Activated naive CD8-positive, alpha-beta T cell treated with anti-CD3 and anti-CD28 coated beads, Interleukin-2, amount 10 ng/mL, durations not matched to agents 7 days and 5 days (primary cell): ENCODE measurements at regions of chr11 and their contacts with region 1.

Region 1: DNA sequence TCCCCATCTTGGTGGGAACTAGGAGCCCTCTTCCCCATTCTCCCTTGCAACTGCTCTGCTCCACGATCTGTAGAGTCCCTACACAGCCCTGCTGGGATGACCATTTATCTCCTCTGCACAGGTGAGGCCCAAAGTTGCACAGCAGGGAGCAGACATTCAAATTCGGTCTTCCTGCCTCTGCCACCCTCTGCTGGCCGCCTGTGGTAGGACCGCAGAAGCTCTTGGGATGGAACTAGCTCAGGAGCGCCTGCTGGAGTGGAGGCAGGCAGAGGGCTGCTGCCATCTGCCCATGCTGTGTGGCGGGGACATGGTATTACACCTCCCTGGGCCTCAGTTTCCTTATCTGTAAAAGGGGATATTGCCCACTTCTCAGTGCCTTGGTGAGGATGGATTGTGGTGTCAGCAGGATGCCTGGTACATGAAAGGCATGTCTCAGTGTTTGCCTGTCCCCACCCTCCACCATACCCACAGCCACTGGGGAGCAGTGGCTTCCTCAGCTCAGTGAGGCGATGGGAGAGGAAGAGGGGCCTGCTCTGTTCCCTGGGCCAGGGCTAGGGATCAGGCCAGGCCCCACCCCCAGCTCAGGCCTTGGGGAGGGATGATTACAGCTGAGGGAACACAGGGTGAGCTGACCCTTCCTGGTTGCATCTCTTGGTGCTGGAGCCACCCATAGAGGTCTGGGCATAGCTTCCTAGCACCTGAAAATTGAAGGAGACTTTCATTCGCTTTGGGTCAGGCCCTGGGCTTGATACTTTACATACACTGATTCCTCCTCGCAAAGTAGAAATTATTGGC is 11.3 kb upstream of the OMP start:
- DNase-seq: peak; percentile 86
- ATAC-seq: peak; percentile 92
- H3K4me3 Mint-ChIP-seq: no peak overlapping the region
- H3K27ac Mint-ChIP-seq: no peak overlapping the region
- H3K4me1 Mint-ChIP-seq: peaks cover 3% of the 10 kb centered on the region
- H3K27me3 Mint-ChIP-seq: no peaks in the 10 kb centered on the region

Region 2: DNA sequence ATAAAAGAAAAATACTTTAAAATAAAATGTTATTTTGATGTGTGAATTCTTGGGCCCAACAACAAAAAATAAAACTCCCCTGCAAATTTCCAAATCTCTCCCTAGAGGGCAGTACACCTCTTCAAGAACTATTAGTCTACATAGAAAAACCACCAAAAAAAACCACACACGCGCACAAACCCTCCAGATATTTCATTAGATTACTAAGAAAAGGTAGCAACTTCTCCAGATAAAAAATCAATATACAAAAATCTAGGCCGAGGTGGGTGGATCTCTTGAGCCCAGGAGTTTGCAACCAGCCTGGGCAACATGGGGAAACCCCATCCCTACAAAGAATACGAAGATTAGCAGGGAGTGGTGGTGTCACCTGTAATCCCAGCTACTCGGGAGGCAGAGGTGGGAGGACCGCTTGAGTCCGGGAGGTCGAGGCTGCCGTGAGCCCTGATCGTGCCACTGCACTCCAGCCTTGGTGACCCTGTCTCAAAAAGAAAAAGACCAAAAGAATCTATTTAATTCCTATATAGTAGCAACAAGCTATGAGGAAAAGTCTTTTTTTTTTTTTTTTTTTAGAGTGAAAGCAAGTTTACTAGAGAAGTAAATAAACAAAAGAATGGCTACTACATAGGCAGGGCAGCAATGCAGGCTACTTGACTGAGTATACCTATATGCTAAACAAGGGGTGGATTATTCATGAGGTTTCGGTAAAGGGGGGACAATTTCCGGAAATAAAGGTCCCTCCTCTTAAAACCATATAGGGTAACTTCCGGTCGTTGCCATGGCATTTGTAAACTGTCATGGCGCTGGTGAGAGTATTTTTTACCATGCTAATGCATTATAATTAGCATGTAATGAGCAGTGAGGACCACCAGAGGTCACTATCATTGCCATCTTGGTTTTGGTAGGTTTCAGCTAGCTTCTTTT is 44.1 kb before region 1 on chr11:
- POLR2A ChIA-PET with region 1: interaction called, 15 read pairs
- DNase-seq: peak; percentile 59
- ATAC-seq: peak; percentile 76
- H3K4me3 Mint-ChIP-seq: peak overlapping the region; percentile 63
- H3K27ac Mint-ChIP-seq: peak overlapping the region; percentile 4
- H3K4me1 Mint-ChIP-seq: peaks cover 9% of the 10 kb centered on the region
- H3K27me3 Mint-ChIP-seq: peaks cover 17% of the 10 kb centered on the region

Region 3: DNA sequence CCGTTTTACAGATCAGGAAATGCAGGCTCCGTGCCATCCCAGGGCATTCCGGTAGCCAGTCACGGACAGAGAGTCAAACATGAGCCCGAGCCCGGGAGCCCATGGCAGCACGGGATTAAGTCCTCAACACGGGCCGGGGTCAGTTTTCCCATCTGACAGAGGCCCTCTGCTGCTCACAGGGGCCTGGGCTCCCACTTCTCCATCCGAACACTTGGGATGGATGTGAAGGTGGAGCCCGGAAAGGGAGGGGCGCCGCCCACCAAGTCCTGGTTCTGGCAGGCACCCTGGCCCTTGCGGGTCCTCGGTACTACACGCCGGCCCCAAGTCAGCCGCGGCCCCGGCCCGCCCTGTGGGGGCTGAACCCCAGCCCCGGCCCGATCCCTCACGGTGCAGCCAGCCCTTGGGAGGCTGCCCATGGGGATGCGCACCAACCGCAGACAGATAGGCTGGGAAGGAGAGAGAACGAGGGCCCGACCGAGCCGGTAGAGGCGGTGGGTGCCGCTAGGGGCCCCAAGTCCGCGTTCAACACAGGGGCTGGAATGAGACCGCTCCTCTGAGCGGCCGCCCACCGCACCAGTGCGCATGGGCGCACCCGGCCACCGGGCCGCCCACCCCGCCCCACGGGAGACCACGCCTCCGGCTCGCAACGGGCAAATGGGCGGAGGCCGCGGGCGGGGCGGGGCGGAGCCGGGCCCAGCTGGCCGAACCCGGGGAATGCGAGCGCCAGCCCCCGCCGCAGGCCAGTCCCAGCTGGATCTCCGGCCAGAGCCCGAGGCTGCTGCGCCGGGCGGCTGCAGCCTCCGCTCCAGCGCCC is 24.9 kb before region 1 on chr11 and contains the start of gene CAPN5:
- POLR2A ChIA-PET with region 1: no interaction called
- DNase-seq: peak; percentile 95
- ATAC-seq: peak; percentile 91
- H3K4me3 Mint-ChIP-seq: peak within 1 kb of the TSS; percentile 80
- H3K27ac Mint-ChIP-seq: peak within 1 kb of the TSS; percentile 50
- H3K4me1 Mint-ChIP-seq: peaks cover 6% of the 10 kb centered on the region
- H3K27me3 Mint-ChIP-seq: peaks cover 25% of the 10 kb centered on the region
- total RNA-seq, gene CAPN5: 2.8 to 3.8 TPM

Region 4: DNA sequence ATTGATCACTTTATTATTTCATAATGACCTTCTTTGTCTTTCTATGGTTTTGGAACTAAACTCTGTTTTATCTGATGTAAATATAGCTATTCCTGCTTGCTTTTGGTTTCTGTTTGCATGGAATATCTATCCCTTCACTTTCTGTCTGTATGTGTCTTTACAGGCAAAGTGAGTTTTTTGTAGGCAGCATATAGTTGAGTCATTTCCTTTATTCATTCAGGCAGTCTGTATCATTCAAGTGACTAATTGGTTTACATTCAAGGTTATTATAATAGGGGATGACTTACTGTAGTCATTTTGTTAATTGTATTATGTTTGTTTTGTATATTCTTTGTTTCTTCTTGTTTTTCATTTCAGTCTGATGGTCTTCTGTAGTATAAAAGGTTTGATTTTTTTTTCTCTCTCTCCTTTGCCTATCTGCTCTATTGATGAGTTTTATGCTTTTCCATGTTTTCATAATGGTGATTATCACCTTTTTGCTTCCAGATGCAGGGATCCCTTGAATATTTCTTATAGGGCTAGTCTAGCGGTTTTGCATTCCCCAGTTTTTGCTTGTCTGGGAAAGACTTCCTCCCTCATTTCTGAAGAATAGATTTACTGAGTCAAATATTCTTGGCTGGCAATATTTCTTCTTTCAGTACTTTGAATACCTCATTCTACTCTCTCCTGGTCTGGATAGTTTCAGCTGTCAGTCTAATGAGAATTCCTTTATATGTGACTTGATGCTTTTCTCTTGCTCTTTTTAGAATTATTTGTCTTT is 159.7 kb after region 1 on chr11:
- POLR2A ChIA-PET with region 1: no interaction called
- DNase-seq: no peak
- ATAC-seq: no peak
- H3K4me3 Mint-ChIP-seq: no peak overlapping the region
- H3K27ac Mint-ChIP-seq: no peak overlapping the region
- H3K4me1 Mint-ChIP-seq: no peaks in the 10 kb centered on the region
- H3K27me3 Mint-ChIP-seq: no peaks in the 10 kb centered on the region